Naive thymus-derived CD4-positive, alpha-beta T cell (primary cell): ENCODE measurements at regions of chr12 and their contacts with region 1.

Region 1: DNA sequence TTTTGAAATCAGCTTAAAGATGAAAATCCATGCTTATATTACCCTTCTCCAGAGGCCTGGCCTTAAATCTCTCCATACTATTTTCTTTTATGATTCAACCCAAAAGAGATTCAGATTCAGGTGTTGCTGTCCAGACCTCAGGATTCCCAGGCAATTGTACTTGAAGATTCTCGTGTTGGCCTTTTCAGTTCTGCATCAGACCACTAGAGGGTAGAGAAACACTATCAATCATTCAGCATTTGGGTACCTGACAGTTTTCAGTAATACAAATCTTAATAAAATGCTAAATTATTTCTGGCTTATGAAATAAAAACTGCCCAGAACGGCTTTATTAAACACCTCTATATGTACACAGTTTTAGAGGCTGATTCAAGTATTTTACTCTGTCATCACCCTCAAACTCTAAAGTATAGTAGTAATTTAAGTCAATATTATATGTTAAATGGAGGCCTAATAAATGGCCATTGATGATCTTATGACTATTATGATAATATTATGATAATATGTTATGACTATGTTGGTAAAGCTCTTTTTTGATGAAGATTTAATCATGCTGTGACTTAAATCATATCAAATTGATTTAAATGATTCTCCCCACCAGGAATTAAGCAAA is 301.1 kb downstream of the DUSP6 start:
- DNase-seq: peak in 7 of 9 donors; percentile 28 to 63 (median 51)
- ATAC-seq: peak; percentile 70
- H3K4me3 ChIP-seq: no peak overlapping the region
- H3K4me3 Mint-ChIP-seq: no peak overlapping the region
- H3K27ac ChIP-seq: no peak overlapping the region
- H3K27ac Mint-ChIP-seq: peak overlapping the region in 1 of 9 donors; percentile 34
- H3K4me1 ChIP-seq: no peaks in the 10 kb centered on the region
- H3K4me1 Mint-ChIP-seq: peaks cover 0 to 30% (median 0%) of the 10 kb centered on the region in 7 donors
- H3K27me3 ChIP-seq: no peaks in the 10 kb centered on the region
- H3K27me3 Mint-ChIP-seq: no peaks in the 10 kb centered on the region

Region 2: GRCh38 chr12:89529738-89530137 is 478.6 kb after region 1 on chr12:
- CTCF ChIA-PET with region 1: interaction called, 7 read pairs
- POLR2A ChIA-PET with region 1: no interaction called
- intact Hi-C with region 1: loop called (anchors 1 kb)
- DNase-seq: peak in 7 of 9 donors; percentile 30 to 62 (median 52)
- ATAC-seq: peak; percentile 58
- H3K4me3 ChIP-seq: no peak overlapping the region
- H3K4me3 Mint-ChIP-seq: no peak overlapping the region
- H3K27ac ChIP-seq: no peak overlapping the region
- H3K27ac Mint-ChIP-seq: peak overlapping the region in 4 of 9 donors; percentile 7 to 71 (median 47)
- H3K4me1 ChIP-seq: peaks cover 5 to 6% of the 10 kb centered on the region in 2 donors
- H3K4me1 Mint-ChIP-seq: peaks cover 4 to 28% (median 16%) of the 10 kb centered on the region in 7 donors
- H3K27me3 ChIP-seq: no peaks in the 10 kb centered on the region
- H3K27me3 Mint-ChIP-seq: no peaks in the 10 kb centered on the region